Head of caudate nucleus (tissue), 42 donors: ENCODE measurements at regions of chr12 and their contacts with region 1.

Region 1: DNA sequence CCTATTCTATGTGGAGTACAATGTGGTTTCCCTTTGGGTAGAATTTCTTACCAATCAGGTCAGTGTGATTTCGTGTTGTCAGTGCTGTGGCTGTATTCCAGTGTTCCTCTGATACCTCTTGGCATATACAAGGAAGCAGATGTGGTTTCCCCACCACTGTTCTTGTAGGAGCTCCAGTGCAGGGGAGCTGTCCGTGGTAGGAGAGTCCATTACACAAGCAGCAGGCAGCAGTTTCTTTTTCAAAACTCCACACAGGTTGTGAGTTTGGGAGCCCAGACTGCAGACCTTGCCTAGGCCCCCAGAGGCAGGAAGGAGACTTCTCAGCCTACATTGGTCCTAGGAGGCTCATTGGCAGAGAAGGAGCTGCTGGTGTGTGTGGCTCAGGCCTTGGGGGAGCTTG is 452.8 kb downstream of the AACS start:
- DNase-seq: no peak

Region 2: DNA sequence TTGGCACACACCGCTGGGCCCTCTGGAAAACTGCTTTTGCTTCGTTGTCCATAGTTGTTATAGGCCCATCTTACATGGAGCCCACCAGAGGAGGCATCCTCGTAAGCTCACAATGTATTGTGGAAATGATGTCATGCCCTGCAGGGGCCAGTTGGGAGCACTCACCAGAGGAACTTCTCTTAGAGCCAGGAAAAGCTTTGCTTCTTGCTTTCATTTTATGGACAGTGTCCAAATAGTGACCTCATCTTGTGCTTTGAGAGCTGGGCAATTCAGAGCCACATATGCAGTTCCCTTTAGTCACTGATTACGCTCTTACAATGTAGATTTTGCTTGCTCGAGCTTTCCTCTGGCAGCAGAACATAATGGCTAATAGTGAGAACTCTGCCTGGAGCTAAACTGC is 177.3 kb before region 1 on chr12:
- intact Hi-C with region 1: loop called (anchors 10 kb)
- DNase-seq: peak in 20 of 42 donors; percentile 11 to 67 (median 32)